ENCODE measurements at regions of chr20 and their contacts with region 1.

Region 1: GRCh38 chr20:64119681-64120341 is 12.4 kb upstream of the NPBWR2 start:
- DNase-seq: peak; percentile 71

Region 2: DNA sequence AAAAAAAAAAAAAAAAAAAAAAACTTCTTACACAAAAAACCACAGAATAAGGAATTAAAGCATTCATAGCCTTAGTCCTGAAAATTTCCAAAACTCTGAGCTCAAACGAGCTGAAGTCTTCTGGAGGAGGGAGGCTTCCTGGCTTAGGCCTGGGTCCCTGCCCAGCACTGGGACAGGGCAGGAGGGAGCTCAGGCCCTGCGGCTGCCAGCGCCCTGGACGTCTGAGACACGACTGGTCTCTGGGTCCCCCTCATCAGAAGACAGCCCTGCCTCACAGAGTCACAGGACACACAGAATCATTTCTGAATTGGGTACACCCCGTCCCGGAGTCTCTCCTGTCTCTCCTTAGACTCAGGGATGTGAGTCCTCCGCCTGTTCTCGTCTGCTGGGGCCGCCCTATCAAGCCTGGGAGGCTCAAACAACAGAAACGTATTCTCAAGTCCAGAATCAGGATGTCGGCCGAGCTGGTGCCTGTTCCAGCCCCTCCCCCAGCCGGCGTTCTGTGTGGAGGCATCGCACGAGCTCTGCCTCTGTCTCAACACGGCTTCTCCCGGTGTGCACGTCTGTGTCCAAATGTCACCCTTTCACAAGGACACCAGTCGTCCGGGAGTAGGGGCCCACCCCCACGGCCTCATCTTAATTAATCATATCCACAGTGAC is 328.2 kb before region 1 on chr20:
- intact Hi-C with region 1: no loop called
- DNase-seq: peak; percentile 84

Region 3: DNA sequence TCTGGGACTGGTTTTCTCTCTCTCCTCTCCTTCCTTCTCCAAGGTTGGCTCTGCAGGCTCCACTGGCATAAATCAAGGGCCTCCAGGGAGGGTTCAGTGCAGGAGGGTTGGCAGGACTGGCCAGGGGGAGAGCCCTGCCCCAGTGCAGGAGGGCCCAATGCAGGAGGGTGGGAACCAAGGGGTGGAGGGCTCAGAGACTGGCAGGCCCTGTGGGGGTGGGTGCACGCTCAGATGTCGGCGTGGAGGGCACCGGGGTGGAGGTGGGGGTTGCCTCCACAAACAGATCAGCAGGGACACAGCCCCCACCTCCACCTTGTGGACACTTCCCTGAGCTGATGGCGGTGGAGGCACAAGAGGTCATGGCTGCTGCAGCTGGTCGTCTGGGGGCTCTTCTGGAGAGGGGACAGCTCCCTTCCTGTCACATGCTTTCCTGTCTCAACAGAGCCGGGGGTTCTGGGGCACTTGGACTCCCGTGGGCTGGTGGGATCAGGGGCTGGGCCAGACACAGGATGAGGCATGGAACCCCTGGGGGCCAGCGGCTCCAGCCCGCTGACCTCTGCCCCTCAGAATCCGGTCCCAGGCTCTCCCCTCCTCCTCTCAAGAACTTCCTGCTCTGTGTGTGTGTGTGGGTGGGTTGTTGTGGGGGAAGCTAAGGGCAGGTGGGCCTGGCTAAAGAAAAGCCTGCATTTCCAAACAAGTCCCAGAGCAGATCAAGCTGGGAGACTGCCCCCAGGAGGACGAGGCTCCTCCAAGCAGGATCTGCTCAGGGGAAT is 261.2 kb before region 1 on chr20:
- intact Hi-C with region 1: no loop called
- DNase-seq: no peak

Region 4: GRCh38 chr20:64038565-64039292 is 81.1 kb before region 1 on chr20:
- intact Hi-C with region 1: loop called (anchors 1 kb)
- DNase-seq: no peak

Region 5: DNA sequence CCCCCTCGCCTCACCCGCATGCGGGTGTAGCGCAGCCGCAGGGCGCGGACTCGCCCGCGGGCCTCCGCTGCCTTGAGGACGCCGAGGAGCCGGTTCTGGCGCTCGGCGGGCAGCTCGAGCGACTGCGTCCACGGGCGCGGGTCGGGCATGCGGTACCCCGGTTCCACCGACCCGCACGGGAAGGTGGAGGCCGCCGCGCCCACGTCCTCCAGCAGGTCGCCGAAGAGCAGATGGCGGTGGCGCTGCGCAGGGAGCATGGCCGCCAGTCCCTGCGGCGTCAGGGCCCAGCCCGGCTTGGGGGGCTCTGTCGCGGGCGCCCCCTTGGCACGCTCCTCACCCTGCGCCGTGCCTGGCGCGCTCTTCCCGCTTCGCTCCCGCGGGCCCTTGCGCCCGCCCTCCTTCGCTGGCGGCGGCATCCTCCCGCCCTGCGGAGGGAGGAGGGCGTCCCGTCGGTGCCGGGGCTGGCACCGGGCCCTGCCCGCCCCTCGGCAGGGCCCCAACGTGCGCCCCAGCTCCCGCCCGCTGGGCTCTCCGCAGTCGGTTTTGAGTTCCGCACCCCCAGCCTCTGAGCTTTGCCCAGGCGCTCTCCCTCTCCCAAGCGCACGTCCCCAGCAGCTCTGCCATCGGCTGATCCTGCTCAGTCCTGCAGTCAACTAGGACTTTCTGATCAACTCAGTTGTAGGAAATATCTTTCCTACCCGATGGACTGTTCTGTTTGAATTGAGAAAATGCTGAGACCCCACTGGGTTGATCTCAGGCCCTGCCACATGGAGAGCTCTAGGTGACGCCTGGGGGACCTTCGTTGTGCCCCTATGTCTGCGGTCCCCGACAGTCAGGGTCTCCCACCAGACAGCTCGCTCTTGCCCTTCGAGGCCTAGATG is 35.8 kb before region 1 on chr20 and contains the start of gene LKAAEAR1:
- intact Hi-C with region 1: loop called (anchors 2 kb)
- DNase-seq: no peak
- total RNA-seq, gene LKAAEAR1: not detected

Measured in cardiac septum (tissue), 1 donor.